ENCODE measurements at regions of chr7 and their contacts with region 1.

Region 1: DNA sequence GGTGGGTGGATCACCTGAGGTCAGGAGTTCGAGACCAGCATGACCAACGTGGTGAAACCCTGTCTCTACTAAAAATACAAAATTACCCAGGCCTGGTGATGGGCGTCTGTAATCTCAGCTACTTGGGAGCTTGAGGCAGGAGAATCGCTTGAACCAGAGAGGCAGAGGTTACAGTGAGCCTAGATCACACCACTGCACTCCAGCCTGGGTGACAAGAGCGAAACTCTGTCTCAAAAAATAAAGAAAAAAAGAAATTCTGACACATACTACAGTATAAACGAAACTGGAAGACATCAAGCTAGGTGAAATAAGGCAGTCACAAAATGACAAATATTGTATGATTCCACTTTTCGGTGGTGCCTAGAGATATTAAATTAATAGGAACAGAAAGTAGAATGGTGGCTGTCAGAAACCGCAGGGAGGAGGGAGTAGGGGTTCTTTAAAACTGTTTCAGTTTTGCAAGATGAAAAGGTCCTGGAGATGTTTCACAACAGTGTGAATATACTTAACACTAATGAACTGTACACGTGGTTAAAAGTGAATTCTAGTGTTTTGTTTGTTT is 23.2 kb downstream of the PILRA start:
- DNase-seq: no peak
- ATAC-seq: peak; percentile 89
- H3K4me3 Mint-ChIP-seq: peak overlapping the region; percentile 73
- H3K27ac Mint-ChIP-seq: peak overlapping the region; percentile 93
- H3K4me1 Mint-ChIP-seq: peaks cover 59% of the 10 kb centered on the region
- H3K27me3 Mint-ChIP-seq: no peaks in the 10 kb centered on the region
- CTCF ChIP-seq: no peak

Region 2: GRCh38 chr7:100376066-100376465 is 20.4 kb before region 1 on chr7:
- CTCF ChIA-PET with region 1: interaction called, 3 read pairs
- POLR2A ChIA-PET with region 1: interaction called, 14 read pairs
- intact Hi-C with region 1: no loop called
- DNase-seq: no peak
- ATAC-seq: no peak
- H3K4me3 Mint-ChIP-seq: no peak overlapping the region
- H3K27ac Mint-ChIP-seq: no peak overlapping the region
- H3K4me1 Mint-ChIP-seq: peaks cover 39% of the 10 kb centered on the region
- H3K27me3 Mint-ChIP-seq: no peaks in the 10 kb centered on the region
- CTCF ChIP-seq: no peak

Region 3: GRCh38 chr7:100673300-100673941 is 276.9 kb after region 1 on chr7 and contains the start of gene GNB2:
- CTCF ChIA-PET with region 1: no interaction called
- POLR2A ChIA-PET with region 1: no interaction called
- intact Hi-C with region 1: no loop called
- DNase-seq: peak; percentile 99
- ATAC-seq: peak; percentile 67
- H3K4me3 Mint-ChIP-seq: peak within 1 kb of the TSS; percentile 97
- H3K27ac Mint-ChIP-seq: peak within 1 kb of the TSS; percentile 95
- H3K4me1 Mint-ChIP-seq: peaks cover 11% of the 10 kb centered on the region
- H3K27me3 Mint-ChIP-seq: no peaks in the 10 kb centered on the region
- CTCF ChIP-seq: no peak
- total RNA-seq, gene GNB2: 129 and 132 TPM in 2 replicates